ENCODE measurements at regions of chr12 and their contacts with region 1.

Region 1: GRCh38 chr12:57005980-57006808 is at the start of gene ZBTB39:
- DNase-seq: peak; percentile 68
- H3K4me3 Mint-ChIP-seq: peak within 1 kb of the TSS; percentile 91
- H3K27ac Mint-ChIP-seq: peak within 1 kb of the TSS; percentile 71
- H3K4me1 Mint-ChIP-seq: peaks cover 63% of the 10 kb centered on the region
- H3K27me3 Mint-ChIP-seq: no peaks in the 10 kb centered on the region
- total RNA-seq, gene ZBTB39: 5.5 to 5.7 TPM

Region 2: DNA sequence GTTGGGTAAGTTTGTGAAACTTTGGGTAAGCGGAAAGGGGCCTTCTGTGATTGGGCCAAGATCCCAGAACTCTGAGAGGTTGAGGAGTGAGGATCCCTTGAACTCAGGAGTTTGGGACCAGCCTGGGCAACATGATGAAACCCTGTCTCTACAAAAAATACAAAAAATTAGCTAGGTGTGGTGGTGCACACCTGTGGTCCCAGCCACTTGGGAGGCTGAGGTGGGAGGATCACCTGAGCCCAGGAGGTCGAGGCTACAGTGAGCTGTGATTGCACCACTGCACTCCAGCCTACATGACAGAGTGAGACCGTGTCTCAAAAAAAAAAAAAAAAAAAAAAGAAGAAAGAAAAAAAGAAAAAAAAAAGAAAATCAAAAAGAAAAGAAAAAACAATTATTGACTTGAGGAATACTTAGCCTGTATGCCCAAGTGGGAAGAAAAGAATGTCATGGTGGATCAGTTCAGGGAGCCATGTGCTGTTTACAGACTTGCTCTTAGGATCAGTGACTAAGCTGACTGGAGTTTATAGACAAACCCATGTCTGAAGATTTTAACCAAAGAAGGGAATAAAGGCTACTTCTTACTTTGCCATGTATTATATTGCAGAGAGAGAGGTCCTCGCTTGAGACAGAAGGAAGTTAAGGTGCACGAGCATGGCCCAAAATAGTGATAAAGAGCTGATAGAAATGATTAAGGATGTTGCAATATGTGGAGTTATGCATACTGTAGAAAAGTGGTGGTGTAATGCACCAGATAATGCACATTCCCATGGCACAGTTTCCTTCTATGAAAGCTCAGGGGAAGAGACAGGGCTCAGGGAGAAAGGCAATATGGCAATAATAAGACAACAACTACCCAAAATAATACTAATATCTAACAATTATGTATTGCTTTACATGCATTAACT is 242.2 kb before region 1 on chr12:
- CTCF ChIA-PET with region 1: interaction called, 58 read pairs
- POLR2A ChIA-PET with region 1: no interaction called
- intact Hi-C with region 1: no loop called
- DNase-seq: no peak
- H3K4me3 Mint-ChIP-seq: no peak overlapping the region
- H3K27ac Mint-ChIP-seq: no peak overlapping the region
- H3K4me1 Mint-ChIP-seq: peaks cover under 1% of the 10 kb centered on the region
- H3K27me3 Mint-ChIP-seq: no peaks in the 10 kb centered on the region

Region 3: DNA sequence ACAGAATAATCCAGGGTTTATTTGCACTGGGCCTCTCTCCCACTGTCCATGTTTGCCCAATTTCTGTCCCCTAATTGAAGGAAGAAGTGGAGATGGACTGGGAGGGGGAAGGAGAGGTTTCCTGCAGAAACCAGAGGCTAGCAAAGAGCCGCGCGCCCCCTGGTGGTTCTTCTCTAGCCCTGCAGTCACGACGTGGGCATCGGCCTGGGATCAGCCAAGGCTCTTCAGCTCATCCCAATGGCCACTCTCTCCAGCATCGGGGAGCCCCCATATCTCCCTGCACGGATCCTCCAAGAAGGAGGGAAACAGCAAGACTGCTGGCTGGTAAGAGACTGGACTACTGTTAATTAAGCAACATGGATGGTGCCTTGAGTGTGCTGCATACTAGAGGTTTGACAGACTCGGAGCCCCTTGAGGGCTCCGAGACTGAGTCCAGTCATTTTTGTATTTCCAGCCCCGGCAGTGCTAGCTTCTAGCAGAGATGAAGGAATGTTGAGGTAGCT is 18.6 kb before region 1 on chr12:
- CTCF ChIA-PET with region 1: interaction called, 62 read pairs
- POLR2A ChIA-PET with region 1: no interaction called
- intact Hi-C with region 1: no loop called
- DNase-seq: peak; percentile 82
- H3K4me3 Mint-ChIP-seq: no peak overlapping the region
- H3K27ac Mint-ChIP-seq: no peak overlapping the region
- H3K4me1 Mint-ChIP-seq: peaks cover 9% of the 10 kb centered on the region
- H3K27me3 Mint-ChIP-seq: no peaks in the 10 kb centered on the region

Region 4: GRCh38 chr12:57031138-57031725 is 25.0 kb after region 1 on chr12:
- CTCF ChIA-PET with region 1: interaction called, 13 read pairs
- POLR2A ChIA-PET with region 1: no interaction called
- intact Hi-C with region 1: no loop called
- DNase-seq: peak; percentile 35
- H3K4me3 Mint-ChIP-seq: no peak overlapping the region
- H3K27ac Mint-ChIP-seq: no peak overlapping the region
- H3K4me1 Mint-ChIP-seq: peaks cover 35% of the 10 kb centered on the region
- H3K27me3 Mint-ChIP-seq: no peaks in the 10 kb centered on the region

Region 5: DNA sequence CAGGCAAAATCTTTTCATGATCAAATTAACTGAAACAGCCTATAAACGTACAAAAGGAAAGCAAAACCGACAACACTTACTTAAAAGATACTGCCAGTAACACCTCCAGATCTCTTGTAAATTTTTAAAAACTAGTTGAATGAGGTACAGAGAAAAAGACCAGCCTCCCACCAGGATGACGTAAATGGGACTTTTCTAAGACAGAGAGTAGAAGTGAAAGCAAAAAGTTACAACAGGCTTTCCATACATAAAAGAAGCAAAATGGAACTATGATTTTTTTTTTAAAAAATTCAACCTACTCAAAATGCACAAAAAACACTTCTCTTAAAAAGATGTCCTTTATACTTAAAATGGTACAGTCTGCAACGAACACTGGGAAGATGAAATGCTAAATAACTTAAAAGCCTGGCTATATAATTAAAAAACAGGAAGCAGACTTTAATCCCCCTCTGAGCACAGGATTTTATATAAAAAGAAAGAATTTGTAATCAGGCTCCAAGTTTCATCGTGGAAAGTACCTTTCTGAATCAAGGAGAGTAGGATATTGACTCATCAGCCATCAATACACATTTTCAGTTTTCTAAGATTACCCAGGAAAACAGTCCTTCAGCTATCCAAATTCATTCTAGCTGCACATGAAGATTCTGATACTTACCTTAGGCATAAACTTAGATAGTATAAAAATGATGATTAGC is 57.9 kb after region 1 on chr12:
- CTCF ChIA-PET with region 1: interaction called, 206 read pairs
- POLR2A ChIA-PET with region 1: interaction called, 3 read pairs
- intact Hi-C with region 1: loop called (anchors 1 kb)
- DNase-seq: peak; percentile 58
- H3K4me3 Mint-ChIP-seq: peak overlapping the region; percentile 67
- H3K27ac Mint-ChIP-seq: peak overlapping the region; percentile 98
- H3K4me1 Mint-ChIP-seq: peaks cover 53% of the 10 kb centered on the region
- H3K27me3 Mint-ChIP-seq: no peaks in the 10 kb centered on the region

Region 6: GRCh38 chr12:57088459-57089248 is 82.5 kb after region 1 on chr12 and contains the start of gene NAB2:
- CTCF ChIA-PET with region 1: interaction called, 6 read pairs
- POLR2A ChIA-PET with region 1: no interaction called
- intact Hi-C with region 1: loop called (anchors 1 kb)
- DNase-seq: peak; percentile 92
- H3K4me3 Mint-ChIP-seq: peak within 1 kb of the TSS; percentile 91
- H3K27ac Mint-ChIP-seq: peak within 1 kb of the TSS; percentile 95
- H3K4me1 Mint-ChIP-seq: peaks cover 61% of the 10 kb centered on the region
- H3K27me3 Mint-ChIP-seq: no peaks in the 10 kb centered on the region
- total RNA-seq, gene NAB2: 39.6 to 41.6 TPM

Region 7: DNA sequence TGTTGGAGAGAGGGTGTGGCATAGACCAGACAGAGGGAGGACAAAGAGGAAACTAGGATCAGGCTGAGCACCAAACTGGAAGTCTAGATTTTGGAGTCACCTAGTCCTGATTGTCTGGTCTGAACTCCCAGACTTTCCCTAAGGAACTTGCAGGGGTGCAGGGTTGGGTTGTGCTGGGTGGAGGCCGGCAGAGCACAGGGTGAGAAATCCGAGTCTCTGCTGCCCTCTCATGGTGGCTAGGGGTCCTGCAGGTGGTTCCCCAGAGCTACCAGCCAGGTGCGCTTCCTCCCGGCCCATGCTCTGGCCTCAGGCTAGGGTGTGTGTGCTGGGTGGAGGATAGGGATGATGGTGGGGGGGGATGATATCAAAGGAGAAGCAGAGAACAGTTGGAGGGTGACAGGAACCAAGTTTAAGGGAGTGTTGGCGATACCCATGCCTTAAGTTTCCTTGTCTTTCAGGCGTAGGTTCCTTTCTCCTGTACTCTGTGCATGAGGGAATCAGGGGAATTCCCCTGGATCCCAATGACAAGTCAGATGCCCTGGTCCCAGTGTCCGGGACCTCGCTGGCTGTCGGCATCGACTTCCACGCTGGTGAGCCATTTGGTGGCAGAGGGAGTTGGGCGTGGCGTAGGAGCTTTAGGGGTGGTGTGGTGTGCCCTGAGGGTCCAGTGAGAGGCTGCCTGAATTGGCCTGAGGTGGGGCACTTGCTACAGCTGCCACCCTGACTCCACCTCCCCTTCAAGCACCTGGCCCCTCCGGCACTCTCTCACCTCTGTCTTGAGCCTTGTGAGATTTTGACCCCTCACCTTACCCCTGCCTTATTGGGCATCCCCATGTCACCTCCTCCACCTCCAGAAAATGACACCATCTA is 177.0 kb after region 1 on chr12:
- CTCF ChIA-PET with region 1: interaction called, 4 read pairs
- POLR2A ChIA-PET with region 1: no interaction called
- intact Hi-C with region 1: loop called (anchors 2 kb)
- DNase-seq: peak; percentile 87
- H3K4me3 Mint-ChIP-seq: no peak overlapping the region
- H3K27ac Mint-ChIP-seq: no peak overlapping the region
- H3K4me1 Mint-ChIP-seq: no peaks in the 10 kb centered on the region
- H3K27me3 Mint-ChIP-seq: no peaks in the 10 kb centered on the region

Measured in activated CD4-positive, alpha-beta memory T cell treated with anti-CD3 and anti-CD28 coated beads for 36 hours (primary cell).